Activated CD4-positive, alpha-beta memory T cell treated with anti-CD3 and anti-CD28 coated beads, Interleukin-2, amount 10 ng/mL, durations not matched to agents 7 days and 5 days (primary cell): ENCODE measurements at regions of chr12 and their contacts with region 1.

Region 1: GRCh38 chr12:118372541-118373495 is at the start of gene TAOK3:
- DNase-seq: peak; percentile 98
- H3K4me3 Mint-ChIP-seq: peak within 1 kb of the TSS; percentile 95
- H3K27ac Mint-ChIP-seq: peak within 1 kb of the TSS; percentile 90
- H3K4me1 Mint-ChIP-seq: peaks cover 52% of the 10 kb centered on the region
- H3K27me3 Mint-ChIP-seq: no peaks in the 10 kb centered on the region
- total RNA-seq, gene TAOK3: 61.9 to 65.5 TPM

Region 2: GRCh38 chr12:118120579-118121363 is 252.0 kb before region 1 on chr12:
- CTCF ChIA-PET with region 1: interaction called, 78 read pairs
- POLR2A ChIA-PET with region 1: interaction called, 15 read pairs
- DNase-seq: peak; percentile 72
- H3K4me3 Mint-ChIP-seq: no peak overlapping the region
- H3K27ac Mint-ChIP-seq: peak overlapping the region; percentile 47
- H3K4me1 Mint-ChIP-seq: peaks cover 7% of the 10 kb centered on the region
- H3K27me3 Mint-ChIP-seq: no peaks in the 10 kb centered on the region

Region 3: DNA sequence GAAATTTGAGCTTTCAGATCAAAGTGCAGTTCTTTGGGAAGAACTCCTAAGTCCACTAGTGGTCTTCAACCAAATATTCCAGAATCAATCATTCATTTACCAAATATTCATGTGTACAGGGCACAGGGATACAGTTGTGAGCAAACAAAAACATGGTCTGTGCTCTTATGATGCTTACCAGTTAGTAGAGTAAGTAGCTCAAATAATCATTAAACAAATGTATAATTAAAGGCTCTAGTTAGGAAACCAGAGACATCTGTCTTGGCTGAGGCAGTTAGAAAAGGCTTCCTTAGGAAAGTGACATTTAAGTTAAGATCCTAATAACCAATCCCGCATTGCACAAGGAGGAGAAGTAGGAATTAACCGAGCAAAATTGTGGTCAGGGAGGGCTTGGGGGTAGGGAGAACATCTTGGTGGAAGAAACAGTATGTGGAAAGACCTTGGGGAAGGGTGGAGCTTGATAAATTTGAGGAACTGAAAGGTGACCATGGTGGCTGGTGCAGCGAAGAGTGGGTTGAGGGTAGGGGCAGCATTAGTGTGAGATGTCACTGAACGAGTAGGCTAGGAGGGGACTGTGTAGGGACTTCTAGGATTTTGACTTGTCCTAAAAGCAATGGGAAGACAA is 196.9 kb before region 1 on chr12:
- CTCF ChIA-PET with region 1: interaction called, 69 read pairs
- POLR2A ChIA-PET with region 1: interaction called, 3 read pairs
- DNase-seq: no peak
- H3K4me3 Mint-ChIP-seq: no peak overlapping the region
- H3K27ac Mint-ChIP-seq: no peak overlapping the region
- H3K4me1 Mint-ChIP-seq: no peaks in the 10 kb centered on the region
- H3K27me3 Mint-ChIP-seq: no peaks in the 10 kb centered on the region

Region 4: DNA sequence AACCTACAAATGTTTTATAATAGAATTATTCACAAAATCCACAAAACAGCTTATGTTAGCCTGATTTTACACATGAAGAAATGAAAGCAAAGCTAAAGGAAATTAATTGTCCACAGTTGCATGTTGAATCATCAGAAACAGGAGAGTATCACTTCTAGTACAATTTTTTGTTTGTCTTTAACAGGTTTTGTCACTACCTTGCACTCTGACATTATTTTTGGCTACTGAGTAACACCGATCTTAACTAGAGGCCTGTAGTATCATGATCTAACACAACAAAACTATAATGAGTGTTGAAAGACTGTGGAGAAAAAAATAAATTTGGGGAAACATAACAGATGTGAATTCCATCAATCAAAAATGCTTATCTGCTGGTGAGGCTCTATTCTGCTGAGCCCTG is 60.2 kb before region 1 on chr12:
- CTCF ChIA-PET with region 1: interaction called, 28 read pairs
- POLR2A ChIA-PET with region 1: interaction called, 10 read pairs
- DNase-seq: no peak
- H3K4me3 Mint-ChIP-seq: peak overlapping the region; percentile 5
- H3K27ac Mint-ChIP-seq: peak overlapping the region; percentile 51
- H3K4me1 Mint-ChIP-seq: peaks cover 45% of the 10 kb centered on the region
- H3K27me3 Mint-ChIP-seq: no peaks in the 10 kb centered on the region

Region 5: DNA sequence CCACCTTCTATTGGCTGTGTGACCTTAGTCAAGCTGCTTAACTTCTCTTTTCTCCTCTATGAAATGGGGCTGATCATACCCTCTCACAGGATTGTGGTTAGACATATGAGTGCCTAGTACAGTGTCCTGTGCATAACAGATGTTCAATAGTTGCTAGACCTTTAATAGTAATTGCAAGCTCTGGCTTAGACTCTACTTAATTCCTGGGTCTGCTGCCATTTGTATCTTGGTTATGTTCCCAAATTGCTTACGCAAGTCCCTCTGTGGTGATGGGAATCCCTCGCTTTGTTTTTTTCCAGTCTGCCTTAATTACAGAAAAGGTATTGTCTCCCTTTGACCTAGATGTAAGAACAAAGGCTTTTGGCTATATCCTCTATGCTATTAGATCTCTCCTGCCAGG is 18.6 kb after region 1 on chr12:
- CTCF ChIA-PET with region 1: interaction called, 23 read pairs
- POLR2A ChIA-PET with region 1: interaction called, 3 read pairs
- DNase-seq: no peak
- H3K4me3 Mint-ChIP-seq: no peak overlapping the region
- H3K27ac Mint-ChIP-seq: no peak overlapping the region
- H3K4me1 Mint-ChIP-seq: no peaks in the 10 kb centered on the region
- H3K27me3 Mint-ChIP-seq: no peaks in the 10 kb centered on the region

Region 6: DNA sequence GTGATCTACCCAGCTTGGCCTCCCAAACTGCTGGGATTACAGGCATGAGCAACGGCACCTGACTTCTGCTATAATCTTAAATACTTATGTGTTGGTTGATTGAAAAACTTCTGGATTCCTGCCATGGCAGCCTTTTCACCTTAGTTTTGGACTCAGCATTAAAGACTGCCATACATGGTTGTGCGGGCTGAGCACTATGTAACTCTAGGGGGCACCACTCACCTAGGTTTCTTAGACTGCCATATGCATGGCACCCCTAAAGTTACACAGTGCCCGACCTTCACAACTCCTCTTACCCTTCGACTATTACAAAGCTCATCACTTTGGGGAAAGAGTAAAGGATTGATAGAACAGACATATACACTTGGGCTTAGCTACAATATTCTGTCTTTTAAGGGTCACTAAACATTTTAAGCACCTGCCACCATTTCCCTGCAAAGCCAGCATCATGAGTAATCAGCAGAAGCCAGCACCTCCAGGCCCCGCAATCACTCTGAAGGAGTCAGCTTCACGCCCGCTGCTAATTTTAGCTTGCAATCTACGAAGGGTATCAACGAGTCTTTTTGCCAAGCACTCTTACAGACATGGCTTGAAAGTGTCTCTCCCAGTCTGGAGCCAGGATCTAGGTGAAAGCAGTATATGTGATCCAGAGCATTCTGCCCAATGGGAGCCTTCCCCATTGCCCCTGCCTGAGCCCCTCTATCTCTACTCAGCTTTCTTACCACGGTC is 63.3 kb after region 1 on chr12:
- CTCF ChIA-PET with region 1: no interaction called
- POLR2A ChIA-PET with region 1: no interaction called
- DNase-seq: no peak
- H3K4me3 Mint-ChIP-seq: no peak overlapping the region
- H3K27ac Mint-ChIP-seq: no peak overlapping the region
- H3K4me1 Mint-ChIP-seq: no peaks in the 10 kb centered on the region
- H3K27me3 Mint-ChIP-seq: peaks cover 2% of the 10 kb centered on the region